Lower leg skin (tissue), 4 donors: ENCODE measurements at regions of chr18 and their contacts with region 1.

Region 1: GRCh38 chr18:63016270-63016669 is 300.9 kb downstream of the PHLPP1 start:
- DNase-seq: no peak
- H3K4me3 ChIP-seq: no peak overlapping the region
- CTCF ChIP-seq: peak in 1 of 3 donors; percentile 14
- POLR2A ChIP-seq: no peak

Region 2: DNA sequence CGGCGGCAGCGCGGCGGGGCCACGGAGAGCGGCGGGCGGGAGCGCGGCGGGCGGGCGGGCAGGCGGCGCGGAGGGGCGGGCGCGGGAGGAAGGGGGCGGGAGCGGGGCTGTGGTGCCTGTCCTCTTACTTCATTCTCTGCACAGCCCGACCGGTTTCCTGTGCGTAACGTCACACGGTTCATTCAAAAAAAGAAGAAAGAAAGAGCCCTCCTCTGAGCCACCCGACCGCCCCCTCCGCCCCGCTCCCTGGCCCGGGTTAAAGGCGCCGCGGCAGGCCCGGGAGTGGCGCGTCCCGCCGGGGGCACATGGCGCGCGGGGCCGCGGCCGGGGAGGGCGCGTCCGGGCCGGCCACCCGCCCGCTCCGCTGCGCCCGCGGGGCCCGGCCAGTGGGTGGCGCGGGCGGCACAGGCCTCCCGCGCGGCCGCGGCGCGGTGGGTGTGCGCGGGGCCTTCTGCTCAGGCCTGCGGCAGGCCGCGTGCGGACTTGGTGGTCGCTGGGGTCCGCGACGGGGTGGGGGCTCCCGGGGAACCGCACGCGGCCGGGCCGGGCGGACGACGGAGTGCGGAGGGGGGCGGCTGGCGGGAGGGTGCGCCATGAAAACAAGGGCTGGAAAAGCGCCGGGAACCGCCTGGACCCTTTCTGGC is 303.9 kb after region 1 on chr18:
- intact Hi-C with region 1: loop called (anchors 10 kb)
- DNase-seq: peak; percentile 89 to 96
- H3K4me3 ChIP-seq: peak overlapping the region; percentile 45
- CTCF ChIP-seq: no peak
- POLR2A ChIP-seq: no peak

Region 3: GRCh38 chr18:63444567-63444966 is 428.3 kb after region 1 on chr18:
- intact Hi-C with region 1: loop called (anchors 5 kb)
- DNase-seq: peak in 1 of 2 donors; percentile 70
- H3K4me3 ChIP-seq: no peak overlapping the region
- CTCF ChIP-seq: no peak
- POLR2A ChIP-seq: no peak